ENCODE measurements at regions of chr15 and their contacts with region 1.

Region 1: DNA sequence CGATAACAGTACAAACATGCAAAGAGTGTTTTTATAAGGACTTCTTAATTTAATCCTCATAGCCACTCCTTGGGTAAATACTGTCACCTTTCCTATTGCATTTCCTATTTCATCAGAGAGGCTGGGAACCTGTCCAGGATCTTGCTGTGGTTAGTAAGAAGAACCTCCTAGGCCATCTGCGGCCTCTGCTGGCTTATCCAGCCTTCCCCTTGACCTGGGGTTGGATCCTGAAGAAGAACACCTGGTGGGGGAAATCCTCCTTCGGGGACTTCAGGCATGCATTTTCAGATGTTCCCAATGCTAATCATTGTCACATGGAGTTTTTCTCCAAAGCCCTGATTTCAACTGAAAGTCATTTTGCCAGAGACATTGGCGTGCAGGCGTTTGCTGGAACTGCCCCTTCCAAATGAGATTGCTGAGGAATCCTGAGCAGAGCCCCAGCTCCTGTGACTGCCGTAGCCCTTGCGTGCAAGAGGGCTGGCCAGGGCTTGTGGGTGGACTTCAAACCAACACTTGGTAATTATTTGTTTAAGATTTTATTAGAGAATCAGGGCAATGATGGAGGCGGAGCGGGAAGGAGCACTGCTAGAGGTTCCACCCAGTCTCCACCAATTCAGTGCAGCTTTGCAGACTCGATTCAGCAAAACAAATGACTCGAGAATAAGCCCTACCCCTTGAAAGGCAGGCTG is 25.6 kb downstream of the GLDN start:
- DNase-seq: no peak
- CTCF ChIP-seq: no peak

Region 2: DNA sequence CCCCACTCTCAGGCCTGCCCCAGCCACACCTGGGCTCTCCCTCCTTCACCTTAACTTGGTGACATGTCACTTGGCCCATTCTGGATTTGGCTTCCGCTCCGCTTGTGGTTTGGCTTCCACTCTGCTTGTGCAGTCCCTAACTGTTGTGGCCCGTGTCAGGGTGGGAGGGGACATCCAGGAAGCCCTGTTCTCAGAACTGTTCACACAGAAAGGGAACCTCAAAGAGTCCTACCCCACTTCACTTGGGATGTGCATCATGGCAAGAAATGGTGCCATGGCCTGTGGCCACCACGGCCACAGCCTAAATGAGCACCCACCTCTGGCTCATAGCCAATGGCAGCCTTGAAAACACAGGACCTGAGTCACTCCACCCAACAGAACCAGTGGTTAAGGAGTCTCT is 92.2 kb before region 1 on chr15:
- CTCF ChIA-PET with region 1: no interaction called
- POLR2A ChIA-PET with region 1: no interaction called
- DNase-seq: no peak
- CTCF ChIP-seq: no peak

Region 3: DNA sequence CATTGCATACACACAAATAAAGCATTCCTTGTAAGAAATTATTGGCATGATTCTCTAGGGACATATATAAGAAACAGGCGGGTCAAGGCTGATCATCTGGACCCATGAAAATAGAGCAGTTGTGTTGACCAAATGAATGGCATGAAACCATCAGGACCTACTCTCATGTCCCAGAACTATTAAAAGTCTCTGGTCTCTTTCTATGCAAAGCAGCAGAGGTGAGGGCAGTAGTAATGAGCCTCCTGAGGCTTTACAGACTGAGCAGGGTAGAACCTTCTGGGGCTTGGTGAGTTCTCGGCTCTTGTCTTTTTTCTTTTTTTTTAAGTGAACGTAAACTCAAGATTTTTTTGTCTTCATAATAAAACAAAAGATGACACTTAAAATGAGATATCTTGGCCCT is 16.4 kb before region 1 on chr15:
- CTCF ChIA-PET with region 1: interaction called, 13 read pairs
- POLR2A ChIA-PET with region 1: no interaction called
- DNase-seq: no peak
- CTCF ChIP-seq: no peak

Region 4: GRCh38 chr15:51380999-51381795 is 14.1 kb after region 1 on chr15:
- CTCF ChIA-PET with region 1: interaction called, 28 read pairs
- POLR2A ChIA-PET with region 1: no interaction called
- DNase-seq: peak; percentile 77
- CTCF ChIP-seq: peak; percentile 89